Left colon (tissue), 2 donors: ENCODE measurements at regions of chr17 and their contacts with region 1.

Region 1: GRCh38 chr17:29533976-29534375 is 32.9 kb downstream of the ABHD15 start:
- DNase-seq: no peak
- ATAC-seq: no peak

Region 2: DNA sequence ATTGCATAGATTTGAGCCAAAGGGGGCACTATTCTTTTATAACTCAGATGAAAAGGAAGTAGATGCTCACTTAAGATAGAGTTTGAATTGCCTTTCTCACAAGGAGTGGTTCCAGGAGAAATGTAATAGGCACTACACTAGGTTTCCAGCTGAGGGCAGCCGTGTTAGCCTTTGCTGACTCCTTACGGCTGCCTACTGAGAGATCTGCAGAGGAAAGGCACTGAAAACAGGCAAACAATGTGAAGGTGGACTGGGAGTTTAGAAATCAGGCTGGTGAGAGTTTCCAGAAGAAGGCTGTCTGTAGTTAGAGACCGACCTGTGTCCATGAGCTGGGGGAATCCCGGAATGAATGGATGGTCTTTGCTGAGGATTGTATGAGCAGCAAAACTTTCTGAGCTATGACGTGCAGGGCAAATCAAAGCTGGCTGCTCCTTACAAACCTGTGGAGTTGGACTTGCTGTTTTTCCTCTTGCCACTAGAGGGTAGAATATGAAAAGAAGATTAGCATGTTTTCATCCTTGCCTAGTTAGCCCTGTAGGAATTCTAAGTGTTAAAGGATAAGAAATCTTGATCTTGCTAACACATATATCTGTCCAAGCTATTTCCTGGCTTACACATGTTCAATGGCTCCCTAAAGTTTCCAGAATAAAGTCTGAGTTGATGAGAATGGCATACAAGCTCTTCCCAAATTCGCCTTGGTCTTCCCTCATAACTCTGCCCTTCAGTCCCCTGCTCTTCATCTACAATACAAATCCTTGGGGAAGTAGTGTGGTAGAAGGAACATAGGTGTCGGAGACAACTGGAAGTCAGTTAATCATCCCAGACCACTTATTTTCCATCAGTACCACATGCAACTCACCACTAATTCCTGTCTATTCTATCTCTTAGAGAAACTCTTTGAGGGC is 163.9 kb before region 1 on chr17:
- intact Hi-C with region 1: loop called in 1 of 2 experiments (anchors 2 kb)
- DNase-seq: peak; percentile 54 to 67
- ATAC-seq: peak; percentile 96

Region 3: GRCh38 chr17:29384900-29385299 is 149.1 kb before region 1 on chr17:
- intact Hi-C with region 1: no loop called
- DNase-seq: no peak
- ATAC-seq: no peak

Region 4: GRCh38 chr17:29412780-29413565 is 121.0 kb before region 1 on chr17:
- intact Hi-C with region 1: no loop called
- DNase-seq: no peak
- ATAC-seq: no peak